GM10248 (cell line): ENCODE measurements at regions of chr6 and their contacts with region 1.

Region 1: DNA sequence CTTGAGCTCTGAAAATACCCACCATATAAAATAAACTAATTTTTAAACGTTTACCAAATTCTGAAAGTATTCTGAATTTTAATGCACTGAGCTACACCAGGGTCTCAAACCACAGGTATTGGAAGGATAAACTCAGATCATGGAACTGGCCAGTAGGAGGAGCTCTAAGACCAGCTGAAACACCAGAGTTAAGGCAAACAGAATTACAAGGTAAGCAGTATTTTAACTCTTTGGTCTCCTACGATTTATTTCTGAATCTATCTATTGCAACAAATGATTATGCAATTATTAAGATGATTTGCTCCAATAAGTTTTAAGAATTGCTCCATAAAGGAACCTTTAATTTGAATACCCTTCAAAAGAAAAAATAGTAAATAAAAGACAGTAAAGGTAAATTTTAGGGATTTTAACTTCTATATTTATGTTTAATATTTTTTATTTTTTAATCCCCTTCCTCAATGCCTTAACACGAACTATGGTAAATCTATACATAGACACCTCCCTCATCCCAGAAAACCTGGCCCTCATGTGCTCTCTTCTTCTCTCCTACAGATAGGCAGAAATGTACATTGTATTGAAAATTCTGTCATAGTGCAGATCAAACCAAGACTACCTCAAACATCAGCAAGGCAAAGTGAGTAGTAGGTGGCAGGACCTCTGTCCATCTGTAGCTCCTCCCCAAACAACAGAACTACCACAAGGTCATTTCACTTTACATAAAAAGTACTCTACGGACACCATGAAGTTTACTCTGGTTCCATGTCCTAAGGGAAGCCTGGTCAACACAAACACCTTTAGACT is 58.4 kb downstream of the SMLR1 start:
- DNase-seq: peak; percentile 51
- CTCF ChIP-seq: peak; percentile 84

Region 2: DNA sequence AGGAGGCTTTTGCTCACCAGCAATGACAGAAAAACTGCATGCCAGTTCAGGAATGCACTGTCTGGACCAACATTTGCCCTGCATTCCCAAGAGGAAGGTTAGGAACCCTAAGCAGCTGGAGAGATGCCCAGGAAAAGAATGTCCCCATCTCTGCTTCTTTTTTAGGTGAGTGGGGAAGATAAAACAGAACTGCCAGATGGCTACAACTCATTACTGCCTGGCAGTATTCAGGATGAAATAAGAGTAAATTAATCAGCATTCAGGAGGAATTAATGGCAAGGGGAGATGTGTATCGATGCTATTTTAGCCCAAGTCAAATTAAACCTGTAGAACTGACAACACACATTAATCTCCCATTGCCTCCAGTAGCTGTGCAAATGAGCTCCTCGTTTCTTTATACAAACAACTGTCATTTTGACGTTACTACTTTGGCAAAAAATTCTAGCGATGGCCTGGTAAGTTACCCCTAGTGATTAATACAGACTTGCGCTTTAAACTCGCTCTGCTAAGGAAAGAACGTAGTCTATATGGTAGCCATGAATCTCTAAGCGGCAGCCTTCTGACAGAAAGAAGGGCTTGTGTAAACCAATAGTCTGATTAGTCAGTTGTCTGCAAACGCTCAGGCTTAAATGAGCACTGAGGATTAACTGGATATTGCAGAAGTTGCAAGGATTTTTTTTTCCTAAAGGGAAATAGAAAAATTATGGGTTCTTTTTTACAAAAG is 75.1 kb before region 1 on chr6:
- CTCF ChIA-PET with region 1: no interaction called
- POLR2A ChIA-PET with region 1: no interaction called
- DNase-seq: no peak
- CTCF ChIP-seq: no peak

Region 3: DNA sequence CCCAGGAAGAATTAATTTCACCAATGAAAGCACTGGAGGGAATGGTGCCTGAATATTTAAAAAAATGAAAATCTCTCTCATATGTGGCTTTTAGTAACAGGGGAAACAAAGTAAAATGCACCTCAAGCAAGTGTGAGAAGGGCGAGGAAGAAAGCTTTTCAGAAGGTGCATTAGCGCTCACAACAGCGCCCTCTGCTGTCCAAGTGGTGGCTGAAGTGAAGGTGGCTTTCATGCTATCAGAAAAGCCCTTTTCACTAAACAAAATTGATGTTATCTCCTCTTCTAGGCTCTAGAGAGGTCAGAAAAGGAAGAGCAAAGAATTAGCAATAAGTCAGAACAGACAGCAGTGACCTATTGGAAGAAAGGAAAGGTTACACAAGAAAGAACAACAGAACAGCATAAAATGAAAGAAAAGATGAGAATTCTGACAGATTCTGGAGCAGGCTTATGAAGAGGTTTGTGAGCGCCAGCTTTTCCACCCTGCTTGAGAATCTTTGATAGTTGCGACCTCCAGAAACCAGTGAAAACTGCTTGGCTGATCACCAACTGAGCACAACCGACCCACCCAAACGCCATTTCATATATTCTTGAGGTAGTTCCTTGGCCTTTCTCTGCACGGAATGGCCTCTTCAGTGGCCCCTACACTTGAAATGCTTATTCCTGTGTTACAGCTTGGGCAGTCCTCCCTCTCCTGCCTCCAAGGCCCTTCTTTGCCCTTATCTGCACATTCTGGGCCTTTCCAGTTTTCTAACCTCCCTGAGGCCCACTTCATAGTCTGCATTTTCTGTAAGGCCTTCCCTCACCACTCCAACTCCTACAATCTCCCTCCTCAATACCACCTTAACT is 13.1 kb before region 1 on chr6:
- CTCF ChIA-PET with region 1: interaction called, 40 read pairs
- POLR2A ChIA-PET with region 1: no interaction called
- DNase-seq: peak; percentile 40
- CTCF ChIP-seq: peak; percentile 87

Region 4: DNA sequence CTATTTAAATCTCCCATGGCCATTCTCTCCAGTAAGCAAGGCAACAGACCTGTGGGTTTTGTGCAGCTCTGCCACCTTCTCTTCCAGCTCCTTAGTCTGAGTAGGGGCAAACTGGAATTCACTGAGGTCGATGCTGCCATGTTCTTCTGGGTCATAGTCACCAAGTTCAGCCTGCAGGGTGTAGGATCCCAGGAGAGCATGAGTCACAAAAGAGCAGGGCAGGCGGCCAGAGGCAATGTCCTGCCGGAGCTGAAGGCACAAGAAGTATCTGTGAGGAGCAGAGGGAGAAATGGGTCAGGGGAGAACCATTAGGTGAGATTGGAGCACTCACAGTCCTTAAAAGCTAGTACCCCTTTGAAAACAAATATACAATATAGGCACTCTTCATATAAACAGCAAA is 15.3 kb after region 1 on chr6:
- CTCF ChIA-PET with region 1: interaction called, 19 read pairs
- POLR2A ChIA-PET with region 1: no interaction called
- DNase-seq: no peak
- CTCF ChIP-seq: no peak

Region 5: GRCh38 chr6:130906736-130907381 is 21.3 kb after region 1 on chr6:
- CTCF ChIA-PET with region 1: interaction called, 17 read pairs
- POLR2A ChIA-PET with region 1: no interaction called
- DNase-seq: no peak
- CTCF ChIP-seq: no peak

Region 6: GRCh38 chr6:131116749-131117360 is 231.3 kb after region 1 on chr6:
- CTCF ChIA-PET with region 1: interaction called, 139 read pairs
- POLR2A ChIA-PET with region 1: no interaction called
- DNase-seq: peak; percentile 22
- CTCF ChIP-seq: peak; percentile 49

Region 7: GRCh38 chr6:131167773-131168172 is 282.2 kb after region 1 on chr6:
- CTCF ChIA-PET with region 1: interaction called, 13 read pairs
- POLR2A ChIA-PET with region 1: no interaction called
- DNase-seq: no peak
- CTCF ChIP-seq: peak; percentile 18

Region 8: GRCh38 chr6:131532580-131533039 is 647.0 kb after region 1 on chr6:
- CTCF ChIA-PET with region 1: interaction called, 11 read pairs
- POLR2A ChIA-PET with region 1: no interaction called
- DNase-seq: peak; percentile 31
- CTCF ChIP-seq: no peak